ENCODE measurements at regions of chr6 and their contacts with region 1.

Region 1: GRCh38 chr6:85482905-85483700 is 33.2 kb downstream of the NT5E start:
- DNase-seq: peak; percentile 94
- H3K4me3 ChIP-seq: no peak overlapping the region
- H3K27ac ChIP-seq: no peak overlapping the region
- H3K4me1 ChIP-seq: peaks cover 0 to 12% (median 5%) of the 10 kb centered on the region in 6 donors
- H3K27me3 ChIP-seq: no peaks in the 10 kb centered on the region
- CTCF ChIP-seq: peak; percentile 97 to 100 (median 98)
- POLR2A ChIP-seq: no peak

Region 2: DNA sequence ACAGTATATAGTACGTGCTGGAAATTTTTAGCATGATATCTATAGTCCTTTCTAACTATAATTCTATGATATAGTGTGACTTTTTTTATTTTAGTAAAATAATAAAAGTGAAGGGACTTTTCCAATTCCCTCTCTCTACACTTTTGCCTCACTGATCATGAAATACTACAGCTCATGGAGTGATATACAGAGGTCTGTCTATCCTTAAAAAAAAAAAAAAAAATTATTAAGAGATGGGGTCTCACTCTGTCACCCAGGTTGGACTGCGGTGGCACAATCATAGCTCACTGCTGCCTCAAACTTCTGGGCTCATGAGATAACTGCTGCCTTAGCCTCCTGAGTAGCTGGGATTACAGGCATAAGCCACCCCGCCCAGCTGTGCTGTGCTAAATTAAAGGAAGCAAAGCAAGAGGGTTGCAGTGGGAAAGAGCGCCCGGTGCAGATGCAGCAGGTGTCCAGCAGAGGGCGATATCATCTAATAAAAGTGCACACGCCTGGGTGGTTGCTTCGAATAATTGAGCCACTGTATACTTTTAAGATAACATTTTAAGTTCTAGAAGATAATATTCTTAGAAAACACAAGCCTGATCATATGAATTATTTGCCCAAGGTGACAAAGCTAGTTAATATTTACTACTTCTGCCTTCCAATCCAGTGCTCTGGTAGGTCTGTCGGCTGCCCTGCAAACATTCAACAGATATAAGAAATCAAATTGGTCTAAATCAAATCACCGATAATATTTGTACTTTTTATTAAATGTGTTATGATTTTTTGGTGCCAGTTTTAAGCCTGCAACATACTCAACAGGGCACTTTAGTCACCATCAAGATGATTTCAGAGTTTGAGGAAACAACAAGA is 128.1 kb before region 1 on chr6:
- intact Hi-C with region 1: loop called (anchors 5 kb)
- DNase-seq: peak; percentile 84
- H3K4me3 ChIP-seq: no peak overlapping the region
- H3K27ac ChIP-seq: no peak overlapping the region
- H3K4me1 ChIP-seq: no peaks in the 10 kb centered on the region
- H3K27me3 ChIP-seq: no peaks in the 10 kb centered on the region
- CTCF ChIP-seq: peak; percentile 78 to 95 (median 93)
- POLR2A ChIP-seq: no peak

Region 3: DNA sequence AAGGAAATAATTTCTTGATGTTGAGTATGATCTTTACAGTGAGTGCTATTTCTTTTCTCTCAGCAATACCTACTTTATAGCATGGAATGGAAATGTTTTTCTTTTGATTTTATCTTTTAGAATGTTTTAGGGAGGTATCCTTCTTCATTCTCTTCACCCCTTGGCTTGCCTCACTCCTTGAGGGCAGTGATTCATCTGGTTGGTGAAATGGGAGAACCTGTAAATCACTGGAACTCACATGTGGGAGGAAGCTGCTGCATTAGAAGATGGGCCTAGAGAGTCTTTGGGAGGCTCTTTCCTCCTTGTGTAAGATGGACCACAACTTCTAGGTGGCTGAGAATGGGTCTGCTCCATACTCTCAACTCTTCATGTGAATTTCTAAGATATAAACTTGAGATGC is 404.4 kb after region 1 on chr6:
- intact Hi-C with region 1: no loop called
- DNase-seq: no peak
- H3K4me3 ChIP-seq: no peak overlapping the region
- H3K27ac ChIP-seq: no peak overlapping the region
- H3K4me1 ChIP-seq: no peaks in the 10 kb centered on the region
- H3K27me3 ChIP-seq: no peaks in the 10 kb centered on the region
- CTCF ChIP-seq: no peak
- POLR2A ChIP-seq: no peak

Measured in spleen (tissue), 13 donors.